PC-9 (cell line): ENCODE measurements at regions of chr10 and their contacts with region 1.

Region 1: DNA sequence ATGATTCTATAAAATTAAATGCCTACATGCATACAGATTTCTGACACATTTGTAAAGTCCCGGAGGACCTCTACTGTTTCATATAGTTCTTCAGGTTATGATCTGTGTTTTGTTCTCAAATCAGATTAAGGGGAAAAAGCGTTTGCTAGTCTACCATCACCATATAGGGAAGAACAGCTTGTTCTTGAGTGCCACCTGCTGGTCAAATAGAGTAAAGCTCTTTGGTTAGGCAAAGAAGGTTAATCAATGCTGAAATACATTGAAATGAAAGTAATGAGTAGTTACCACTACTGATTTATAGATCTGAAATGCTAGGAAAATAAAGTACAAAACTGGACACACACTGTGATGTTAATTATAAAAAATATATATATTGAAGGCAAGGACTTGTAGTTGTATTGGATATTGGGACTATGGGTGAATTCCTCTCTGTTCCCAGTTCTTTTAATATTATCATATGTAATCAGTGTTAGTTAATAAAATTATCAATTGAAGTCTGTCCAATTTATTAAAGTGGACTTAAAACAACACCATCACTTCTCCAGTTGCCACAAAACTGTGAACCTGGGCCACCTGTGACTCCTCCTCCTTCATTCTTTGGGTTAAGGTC is 72.6 kb upstream of the PDLIM1 start:
- DNase-seq: peak; percentile 33 to 43
- H3K4me3 ChIP-seq: no peak overlapping the region
- H3K27ac ChIP-seq: no peak overlapping the region
- H3K4me1 ChIP-seq: no peaks in the 10 kb centered on the region
- H3K27me3 ChIP-seq: no peaks in the 10 kb centered on the region
- CTCF ChIP-seq: peak; percentile 88

Region 2: GRCh38 chr10:94623572-94623971 is 739.8 kb before region 1 on chr10:
- CTCF ChIA-PET with region 1: no interaction called
- POLR2A ChIA-PET with region 1: no interaction called
- intact Hi-C with region 1: loop called (anchors 10 kb)
- DNase-seq: no peak
- H3K4me3 ChIP-seq: no peak overlapping the region
- H3K27ac ChIP-seq: no peak overlapping the region
- H3K4me1 ChIP-seq: no peaks in the 10 kb centered on the region
- H3K27me3 ChIP-seq: no peaks in the 10 kb centered on the region
- CTCF ChIP-seq: no peak

Region 3: GRCh38 chr10:95133016-95133752 is 230.2 kb before region 1 on chr10:
- CTCF ChIA-PET with region 1: no interaction called
- POLR2A ChIA-PET with region 1: no interaction called
- intact Hi-C with region 1: loop called (anchors 1 kb)
- DNase-seq: peak; percentile 54 to 56
- H3K4me3 ChIP-seq: no peak overlapping the region
- H3K27ac ChIP-seq: no peak overlapping the region
- H3K4me1 ChIP-seq: no peaks in the 10 kb centered on the region
- H3K27me3 ChIP-seq: no peaks in the 10 kb centered on the region
- CTCF ChIP-seq: peak; percentile 82

Region 4: DNA sequence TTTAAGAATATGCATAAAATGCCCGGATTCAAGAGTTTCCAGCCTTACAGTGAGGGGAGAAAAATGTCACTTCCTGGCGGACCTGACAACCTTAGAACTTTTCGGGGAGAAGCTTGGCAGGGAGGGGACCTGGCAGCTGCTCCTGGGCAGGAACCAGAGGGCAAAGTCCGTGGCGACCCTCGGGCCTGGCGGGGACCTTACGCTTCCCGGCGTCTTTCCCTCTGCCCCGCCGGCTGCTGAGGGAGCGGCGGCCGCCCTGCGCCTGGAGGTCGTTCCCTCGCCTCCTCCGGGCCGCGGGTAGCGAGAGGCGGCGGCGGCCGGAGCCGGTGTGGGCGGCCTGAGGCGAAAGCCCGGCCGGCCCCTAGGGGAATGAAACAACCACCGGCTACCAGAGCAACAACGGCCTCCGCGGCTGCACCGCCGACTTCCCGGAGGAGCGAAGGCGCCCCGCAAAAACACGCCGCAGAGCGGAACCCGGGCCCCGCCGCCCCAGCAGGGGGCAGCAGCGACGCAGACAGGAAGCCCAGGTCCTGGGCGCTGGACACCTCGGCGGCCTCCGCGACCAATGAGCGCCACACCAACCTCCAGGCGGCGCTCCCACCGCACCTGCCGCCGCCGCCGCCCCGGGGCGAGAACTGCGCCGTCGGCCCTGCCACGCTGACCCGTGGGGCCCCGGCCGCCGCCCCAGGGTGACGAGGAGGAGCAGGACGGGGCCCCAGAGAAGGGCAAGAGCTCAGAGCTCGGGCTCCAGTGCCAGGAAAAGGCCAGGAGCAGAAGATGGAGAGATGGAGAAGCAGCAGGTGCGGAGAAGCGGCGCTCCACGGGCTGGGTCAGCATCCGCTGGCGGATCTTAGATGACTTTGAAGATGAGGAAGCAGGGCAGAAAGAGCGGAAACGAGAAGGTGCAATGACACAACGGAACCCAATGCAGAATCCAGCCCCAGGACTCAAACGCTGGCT is 179.9 kb before region 1 on chr10:
- CTCF ChIA-PET with region 1: interaction called, 3 read pairs
- POLR2A ChIA-PET with region 1: interaction called, 6 read pairs
- intact Hi-C with region 1: loop called (anchors 1 kb)
- DNase-seq: peak in 1 of 2 experiments; percentile 78
- H3K4me3 ChIP-seq: peak overlapping the region; percentile 62
- H3K27ac ChIP-seq: 0 out of 2 replicates have a peak overlapping the region, but pooled peaks have one; percentile 26
- H3K4me1 ChIP-seq: no peaks in the 10 kb centered on the region
- H3K27me3 ChIP-seq: no peaks in the 10 kb centered on the region
- CTCF ChIP-seq: peak; percentile 87

Region 5: DNA sequence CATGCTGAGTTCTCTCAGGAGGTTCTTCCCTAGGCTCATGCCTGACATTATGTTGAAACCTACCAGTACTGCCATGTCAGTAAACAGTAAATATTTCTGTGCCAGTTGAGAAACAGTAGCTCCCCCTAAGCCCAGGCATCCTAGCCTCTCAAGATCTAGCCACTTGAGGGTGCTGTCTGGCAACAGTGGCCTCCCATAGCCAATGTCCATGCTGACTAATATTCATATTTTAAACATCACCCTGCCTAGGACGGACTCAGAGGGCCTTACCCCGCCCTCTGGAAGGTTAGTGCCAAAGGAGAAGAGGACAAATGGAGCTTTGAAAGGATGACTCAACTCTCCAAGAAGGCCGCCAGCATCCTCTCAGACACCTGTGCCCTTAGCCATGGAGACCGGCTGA is 161.7 kb before region 1 on chr10:
- CTCF ChIA-PET with region 1: interaction called, 18 read pairs
- POLR2A ChIA-PET with region 1: no interaction called
- intact Hi-C with region 1: loop called (anchors 5 kb)
- DNase-seq: peak; percentile 49 to 71
- H3K4me3 ChIP-seq: no peak overlapping the region
- H3K27ac ChIP-seq: no peak overlapping the region
- H3K4me1 ChIP-seq: no peaks in the 10 kb centered on the region
- H3K27me3 ChIP-seq: no peaks in the 10 kb centered on the region
- CTCF ChIP-seq: peak; percentile 58

Region 6: GRCh38 chr10:95260397-95260881 is 103.0 kb before region 1 on chr10:
- CTCF ChIA-PET with region 1: no interaction called
- POLR2A ChIA-PET with region 1: no interaction called
- intact Hi-C with region 1: loop called (anchors 5 kb)
- DNase-seq: peak; percentile 52 to 83
- H3K4me3 ChIP-seq: no peak overlapping the region
- H3K27ac ChIP-seq: peak overlapping the region; percentile 97
- H3K4me1 ChIP-seq: peaks cover 55% of the 10 kb centered on the region
- H3K27me3 ChIP-seq: no peaks in the 10 kb centered on the region
- CTCF ChIP-seq: no peak

Region 7: DNA sequence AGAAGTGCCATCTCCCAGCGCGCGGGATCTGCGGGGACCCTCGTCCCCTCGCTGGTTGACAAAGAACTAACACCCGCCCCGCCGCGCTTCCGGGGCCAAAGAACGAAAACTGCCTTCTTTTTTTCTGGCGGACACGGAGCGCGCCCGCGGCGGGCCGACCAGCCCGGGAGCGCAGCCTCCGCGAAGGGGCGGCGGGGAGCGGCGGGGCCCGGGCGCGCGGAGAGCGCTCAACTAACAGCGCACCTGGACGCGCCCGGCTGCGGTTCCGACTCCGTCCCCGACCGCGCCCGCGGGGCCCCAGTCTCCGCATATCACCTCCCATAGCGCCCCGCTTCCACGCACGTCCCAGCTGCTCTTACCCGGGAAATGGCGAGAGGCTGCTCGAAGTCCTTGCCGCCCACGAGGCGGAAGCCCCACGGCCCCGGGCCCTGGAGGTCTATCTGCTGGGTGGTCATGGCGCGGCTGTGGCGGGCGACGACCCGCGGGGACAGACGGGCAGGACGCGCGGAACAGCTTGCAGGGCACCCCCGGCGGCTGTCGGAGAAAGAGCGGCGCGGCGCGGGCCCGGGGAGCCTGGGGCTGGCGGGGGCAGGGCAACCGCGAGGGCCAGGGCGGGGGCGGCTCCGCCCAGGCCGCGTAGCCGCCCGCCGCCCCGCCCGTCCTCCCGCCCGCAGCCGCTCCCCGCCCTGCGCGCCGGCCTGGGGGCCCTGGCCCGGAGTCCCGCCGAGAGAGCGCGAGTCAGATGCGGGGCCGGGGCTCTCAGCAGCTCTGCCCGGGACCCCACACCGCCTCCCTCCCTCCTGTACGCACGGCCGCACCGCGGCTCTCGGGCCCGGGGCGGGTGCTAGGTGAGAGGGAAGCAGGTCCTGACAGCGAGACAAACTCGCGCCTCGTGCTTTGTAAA is 72.7 kb before region 1 on chr10 and contains the start of gene PDLIM1:
- CTCF ChIA-PET with region 1: no interaction called
- POLR2A ChIA-PET with region 1: no interaction called
- intact Hi-C with region 1: loop called (anchors 1 kb)
- DNase-seq: peak in 1 of 2 experiments; percentile 71
- H3K4me3 ChIP-seq: peak within 1 kb of the TSS; percentile 59
- H3K27ac ChIP-seq: peak within 1 kb of the TSS; percentile 23; the same call in 1 of the 2 replicates
- H3K4me1 ChIP-seq: peaks cover 31% of the 10 kb centered on the region
- H3K27me3 ChIP-seq: no peaks in the 10 kb centered on the region
- CTCF ChIP-seq: no peak
- total RNA-seq, gene PDLIM1: 202 and 215 TPM in 2 replicates

Region 8: GRCh38 chr10:95391581-95392216 is 28.3 kb after region 1 on chr10:
- CTCF ChIA-PET with region 1: no interaction called
- POLR2A ChIA-PET with region 1: no interaction called
- intact Hi-C with region 1: no loop called
- DNase-seq: no peak
- H3K4me3 ChIP-seq: no peak overlapping the region
- H3K27ac ChIP-seq: no peak overlapping the region
- H3K4me1 ChIP-seq: peaks cover 59% of the 10 kb centered on the region
- H3K27me3 ChIP-seq: no peaks in the 10 kb centered on the region
- CTCF ChIP-seq: no peak